PC-3 (cell line): ENCODE measurements at regions of chr11 and their contacts with region 1.

Region 1: DNA sequence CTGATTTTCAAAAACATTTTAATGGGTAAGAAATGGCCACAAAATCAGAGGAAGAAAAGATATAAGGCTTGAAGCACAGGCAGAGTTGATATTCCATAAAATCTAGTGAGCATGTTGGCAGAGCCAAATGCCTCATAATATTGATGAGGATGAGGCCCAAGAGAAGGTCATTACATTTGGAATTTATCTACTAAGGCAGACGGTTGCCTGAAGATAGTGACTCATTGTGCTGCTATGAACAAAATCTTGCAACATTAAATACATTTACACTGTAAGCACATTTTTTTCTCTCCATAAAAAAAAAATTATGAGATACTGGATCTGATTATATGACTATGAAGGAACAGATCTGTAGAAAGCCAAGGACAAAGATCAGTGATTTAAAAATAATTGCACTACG is 881.4 kb upstream of the CHORDC1 start:
- DNase-seq: peak; percentile 89
- ATAC-seq: peak; percentile 59
- H3K4me3 ChIP-seq: no peak overlapping the region
- H3K27ac ChIP-seq: no peak overlapping the region
- H3K4me1 ChIP-seq: peaks cover 14% of the 10 kb centered on the region
- H3K27me3 ChIP-seq: no peaks in the 10 kb centered on the region
- CTCF ChIP-seq: no peak

Region 2: GRCh38 chr11:91163619-91164451 is 59.6 kb after region 1 on chr11:
- CTCF ChIA-PET with region 1: no interaction called
- POLR2A ChIA-PET with region 1: no interaction called
- intact Hi-C with region 1: loop called (anchors 2 kb)
- DNase-seq: peak; percentile 89
- ATAC-seq: peak; percentile 30; the same call in 1 of the 2 replicates
- H3K4me3 ChIP-seq: peak overlapping the region; percentile 14; the same call in 1 of the 2 replicates
- H3K27ac ChIP-seq: peak overlapping the region; percentile 19; the same call in 1 of the 2 replicates
- H3K4me1 ChIP-seq: peaks cover 37% of the 10 kb centered on the region
- H3K27me3 ChIP-seq: no peaks in the 10 kb centered on the region
- CTCF ChIP-seq: no peak

Region 3: GRCh38 chr11:91421641-91422040 is 317.4 kb after region 1 on chr11:
- CTCF ChIA-PET with region 1: no interaction called
- POLR2A ChIA-PET with region 1: no interaction called
- intact Hi-C with region 1: no loop called
- DNase-seq: no peak
- ATAC-seq: no peak
- H3K4me3 ChIP-seq: no peak overlapping the region
- H3K27ac ChIP-seq: no peak overlapping the region
- H3K4me1 ChIP-seq: no peaks in the 10 kb centered on the region
- H3K27me3 ChIP-seq: no peaks in the 10 kb centered on the region
- CTCF ChIP-seq: no peak